PC-3 (cell line): ENCODE measurements at regions of chr14 and their contacts with region 1.

Region 1: DNA sequence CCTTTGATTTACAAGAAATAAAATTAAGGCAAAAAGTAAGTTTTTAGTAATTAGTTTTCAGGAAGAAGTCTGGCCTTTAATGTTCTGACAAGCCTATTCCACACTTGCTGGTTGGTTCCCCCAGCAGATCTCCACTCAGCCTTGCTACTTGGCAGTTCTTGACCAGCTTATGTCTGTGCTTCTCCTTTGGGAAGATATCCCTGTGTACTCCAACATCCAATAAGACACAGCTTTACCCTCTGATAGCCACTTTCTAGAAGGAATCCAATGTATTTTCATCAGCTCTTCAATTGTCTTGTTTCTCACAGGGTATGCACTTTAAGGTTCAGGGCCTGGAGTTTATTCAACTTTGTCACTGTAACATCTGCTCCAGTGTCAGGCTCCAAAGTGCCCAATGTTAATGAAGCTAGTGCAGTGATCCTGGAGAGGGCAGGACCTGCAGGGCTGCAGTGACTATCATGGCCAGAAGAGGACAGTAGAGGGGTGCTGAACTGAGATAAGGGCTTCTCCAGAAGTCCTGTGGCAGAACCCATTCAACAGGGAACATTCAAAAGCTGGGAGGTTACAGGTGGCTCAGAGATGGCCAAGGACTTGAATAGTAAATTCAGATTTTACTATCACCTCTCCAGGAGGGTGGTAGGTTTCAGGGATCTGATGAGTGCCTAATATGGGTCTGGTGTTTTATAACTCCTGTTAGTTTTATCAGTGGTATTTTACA is 22.9 kb downstream of the JKAMP start:
- DNase-seq: peak; percentile 95
- ATAC-seq: peak; percentile 90
- H3K4me3 ChIP-seq: no peak overlapping the region
- H3K27ac ChIP-seq: no peak overlapping the region
- H3K4me1 ChIP-seq: peaks cover 7% of the 10 kb centered on the region
- H3K27me3 ChIP-seq: no peaks in the 10 kb centered on the region; the same call in 1 of the 2 replicates
- CTCF ChIP-seq: peak; percentile 100

Region 2: GRCh38 chr14:59570114-59570513 is 62.9 kb after region 1 on chr14:
- CTCF ChIA-PET with region 1: interaction called, 15 read pairs
- POLR2A ChIA-PET with region 1: interaction called, 6 read pairs
- intact Hi-C with region 1: no loop called
- DNase-seq: peak; percentile 65
- ATAC-seq: peak; percentile 52
- H3K4me3 ChIP-seq: no peak overlapping the region
- H3K27ac ChIP-seq: no peak overlapping the region
- H3K4me1 ChIP-seq: peaks cover 19% of the 10 kb centered on the region
- H3K27me3 ChIP-seq: peaks cover 45% of the 10 kb centered on the region
- CTCF ChIP-seq: peak; percentile 72

Region 3: DNA sequence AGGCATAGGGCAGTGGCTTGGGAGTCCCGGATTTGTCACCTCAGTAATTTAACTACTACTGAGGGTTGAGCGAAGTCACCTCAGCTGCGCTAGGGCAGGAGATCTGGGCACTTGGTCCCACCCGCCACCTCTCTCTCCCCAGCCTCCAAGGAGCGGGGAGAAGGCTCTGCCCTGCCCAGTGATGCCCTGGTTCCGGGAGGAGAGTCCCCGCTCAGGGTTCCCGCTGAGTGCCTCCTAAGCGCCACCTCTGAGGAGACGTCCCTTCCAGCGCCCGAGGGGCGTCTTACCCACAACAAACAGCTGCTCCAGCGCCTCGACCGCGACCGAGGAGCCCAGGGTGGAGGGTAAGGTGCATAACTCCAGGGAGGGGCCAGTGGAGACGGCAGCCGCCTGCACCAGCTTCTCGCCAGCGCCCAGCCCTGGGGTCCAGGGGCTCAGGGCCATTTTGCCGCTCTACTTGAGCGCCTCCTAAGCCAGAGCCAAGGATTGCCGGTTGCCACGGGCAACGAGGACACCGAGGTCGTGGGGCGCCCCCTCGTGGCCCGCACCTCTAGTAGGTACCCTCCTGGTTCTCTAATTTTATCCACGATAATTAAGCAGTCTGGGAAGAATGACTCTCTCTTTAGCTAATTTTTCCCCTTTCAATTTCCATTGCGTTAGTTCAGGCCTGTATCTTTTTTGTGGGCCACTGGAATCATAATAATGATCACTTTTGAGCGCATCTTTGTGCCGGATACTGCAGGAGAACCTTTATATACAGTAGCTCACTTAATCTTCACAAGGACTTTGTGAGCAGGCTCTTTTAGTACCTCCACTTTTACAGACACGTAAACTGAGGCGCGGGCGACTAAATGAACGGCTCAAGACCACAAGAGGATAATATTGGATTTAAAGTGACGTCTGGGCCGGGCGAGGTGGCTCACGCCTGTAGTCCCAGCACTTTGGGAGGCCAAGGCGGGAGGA is 69.4 kb after region 1 on chr14 and contains the start of gene CCDC175:
- CTCF ChIA-PET with region 1: interaction called, 7 read pairs
- POLR2A ChIA-PET with region 1: no interaction called
- intact Hi-C with region 1: loop called (anchors 1 kb)
- DNase-seq: peak; percentile 98
- ATAC-seq: peak; percentile 97
- H3K4me3 ChIP-seq: peak within 1 kb of the TSS; percentile 62
- H3K27ac ChIP-seq: no peak within 1 kb of the TSS
- H3K4me1 ChIP-seq: peaks cover 6% of the 10 kb centered on the region
- H3K27me3 ChIP-seq: peaks cover 63% of the 10 kb centered on the region
- CTCF ChIP-seq: peak; percentile 100
- total RNA-seq, gene CCDC175: not detected in 2 replicates

Region 4: DNA sequence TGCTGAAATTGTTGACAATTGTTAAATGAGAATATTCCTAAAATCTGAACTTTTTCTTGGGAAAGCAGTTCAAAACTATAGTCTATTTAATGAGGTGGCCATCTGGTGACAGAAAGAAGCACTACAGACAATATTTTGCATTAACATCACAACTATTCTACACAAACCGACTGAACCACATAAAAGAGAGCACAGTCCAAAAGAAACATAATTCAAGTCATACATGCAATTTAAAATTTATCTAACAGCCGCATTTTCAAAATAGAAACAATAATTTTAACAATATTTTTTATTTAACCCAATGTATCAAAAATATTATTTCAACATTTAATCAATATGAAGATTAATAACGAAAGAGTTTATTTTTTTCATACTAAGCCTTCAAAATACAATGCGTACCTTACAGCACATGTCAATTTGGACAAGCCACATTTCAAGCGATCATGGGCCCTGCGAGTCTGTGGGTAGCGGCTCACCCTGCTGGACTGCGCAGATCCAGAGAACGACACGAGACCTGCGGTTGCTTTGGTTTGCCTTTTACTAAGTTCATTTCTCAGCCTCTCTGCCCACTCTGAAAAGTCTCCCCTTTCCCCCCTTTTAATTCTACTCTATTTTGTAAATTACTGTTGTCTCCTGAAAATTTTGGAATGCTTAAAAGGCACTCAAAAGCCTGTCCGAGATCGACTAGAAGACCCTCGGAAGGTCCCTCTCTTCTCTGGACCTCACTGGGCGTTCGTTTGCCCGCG is 411.8 kb after region 1 on chr14:
- CTCF ChIA-PET with region 1: no interaction called
- POLR2A ChIA-PET with region 1: no interaction called
- intact Hi-C with region 1: loop called (anchors 2 kb)
- DNase-seq: peak; percentile 71
- ATAC-seq: peak; percentile 80
- H3K4me3 ChIP-seq: peak overlapping the region; percentile 20; the same call in 1 of the 2 replicates
- H3K27ac ChIP-seq: no peak overlapping the region
- H3K4me1 ChIP-seq: peaks cover 5% of the 10 kb centered on the region; the same call in 1 of the 2 replicates
- H3K27me3 ChIP-seq: peaks cover 74% of the 10 kb centered on the region
- CTCF ChIP-seq: peak; percentile 94